HepG2 (cell line): ENCODE measurements at regions of chr10 and their contacts with region 1.

Region 1: DNA sequence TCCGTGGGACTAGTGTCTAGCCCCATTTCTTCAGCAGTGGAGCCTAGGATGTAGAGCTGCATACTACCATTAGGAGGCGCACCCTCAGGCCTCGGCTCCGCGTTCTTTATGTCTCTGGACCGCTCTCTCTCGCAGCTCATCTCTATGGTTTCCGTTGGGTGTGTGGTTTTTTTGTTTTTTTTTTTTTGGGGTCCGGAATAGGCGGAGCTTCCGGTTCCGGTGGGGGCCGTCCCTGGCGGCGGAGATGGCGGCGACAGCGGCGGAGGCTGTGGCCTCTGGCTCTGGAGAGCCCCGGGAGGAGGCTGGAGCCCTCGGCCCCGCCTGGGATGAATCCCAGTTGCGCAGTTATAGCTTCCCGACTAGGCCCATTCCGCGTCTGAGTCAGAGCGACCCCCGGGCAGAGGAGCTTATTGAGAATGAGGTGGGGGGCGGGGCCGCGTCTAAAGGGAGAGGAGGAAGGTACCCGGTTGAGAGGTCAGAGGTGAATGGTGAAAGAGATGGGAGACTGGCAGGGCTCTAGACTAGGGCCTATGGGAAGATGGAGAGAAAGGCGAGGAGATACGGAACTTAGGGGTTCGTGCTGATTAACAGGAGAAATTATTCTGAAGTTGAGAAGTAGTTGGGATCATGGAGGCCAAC is at the start of gene HIF1AN:
- DNase-seq: peak; percentile 94
- ATAC-seq: peak; percentile 98
- H3K4me3 ChIP-seq: peak within 1 kb of the TSS; percentile 72 to 85 (median 83)
- H3K27ac ChIP-seq: no peak within 1 kb of the TSS
- H3K4me1 ChIP-seq: peaks cover 35% of the 10 kb centered on the region
- H3K27me3 ChIP-seq: no peaks in the 10 kb centered on the region; a peak in 1 of 5 replicates
- CTCF ChIP-seq: peak; percentile 94
- EP300 ChIP-seq: peak in 1 of 2 experiments; percentile 24; a peak in 1 of 4 replicates
- POLR2A ChIP-seq: peak; percentile 70 to 86
- RAD21 ChIP-seq: no peak
- total RNA-seq, gene HIF1AN: 10.7 and 14.9 TPM in 2 replicates

Region 2: GRCh38 chr10:100518761-100519241 is 17.0 kb before region 1 on chr10:
- CTCF ChIA-PET with region 1: no interaction called
- POLR2A ChIA-PET with region 1: interaction called, 13 read pairs
- in situ Hi-C with region 1: no loop called
- intact Hi-C with region 1: no loop called
- DNase-seq: peak; percentile 65
- ATAC-seq: peak; percentile 76
- H3K4me3 ChIP-seq: peak overlapping the region; percentile 41 to 78 (median 60); a peak in 5 of 6 replicates
- H3K27ac ChIP-seq: no peak overlapping the region
- H3K4me1 ChIP-seq: peaks cover 14% of the 10 kb centered on the region
- H3K27me3 ChIP-seq: no peaks in the 10 kb centered on the region
- CTCF ChIP-seq: peak; percentile 77
- EP300 ChIP-seq: no peak
- POLR2A ChIP-seq: no peak
- RAD21 ChIP-seq: no peak

Region 3: GRCh38 chr10:100551196-100551595 is 15.4 kb after region 1 on chr10:
- CTCF ChIA-PET with region 1: no interaction called
- POLR2A ChIA-PET with region 1: interaction called, 14 read pairs
- in situ Hi-C with region 1: no loop called
- intact Hi-C with region 1: no loop called
- DNase-seq: no peak
- ATAC-seq: no peak
- H3K4me3 ChIP-seq: no peak overlapping the region
- H3K27ac ChIP-seq: no peak overlapping the region
- H3K4me1 ChIP-seq: peaks cover 14% of the 10 kb centered on the region
- H3K27me3 ChIP-seq: no peaks in the 10 kb centered on the region
- CTCF ChIP-seq: no peak
- EP300 ChIP-seq: no peak
- POLR2A ChIP-seq: no peak
- RAD21 ChIP-seq: no peak

Region 4: DNA sequence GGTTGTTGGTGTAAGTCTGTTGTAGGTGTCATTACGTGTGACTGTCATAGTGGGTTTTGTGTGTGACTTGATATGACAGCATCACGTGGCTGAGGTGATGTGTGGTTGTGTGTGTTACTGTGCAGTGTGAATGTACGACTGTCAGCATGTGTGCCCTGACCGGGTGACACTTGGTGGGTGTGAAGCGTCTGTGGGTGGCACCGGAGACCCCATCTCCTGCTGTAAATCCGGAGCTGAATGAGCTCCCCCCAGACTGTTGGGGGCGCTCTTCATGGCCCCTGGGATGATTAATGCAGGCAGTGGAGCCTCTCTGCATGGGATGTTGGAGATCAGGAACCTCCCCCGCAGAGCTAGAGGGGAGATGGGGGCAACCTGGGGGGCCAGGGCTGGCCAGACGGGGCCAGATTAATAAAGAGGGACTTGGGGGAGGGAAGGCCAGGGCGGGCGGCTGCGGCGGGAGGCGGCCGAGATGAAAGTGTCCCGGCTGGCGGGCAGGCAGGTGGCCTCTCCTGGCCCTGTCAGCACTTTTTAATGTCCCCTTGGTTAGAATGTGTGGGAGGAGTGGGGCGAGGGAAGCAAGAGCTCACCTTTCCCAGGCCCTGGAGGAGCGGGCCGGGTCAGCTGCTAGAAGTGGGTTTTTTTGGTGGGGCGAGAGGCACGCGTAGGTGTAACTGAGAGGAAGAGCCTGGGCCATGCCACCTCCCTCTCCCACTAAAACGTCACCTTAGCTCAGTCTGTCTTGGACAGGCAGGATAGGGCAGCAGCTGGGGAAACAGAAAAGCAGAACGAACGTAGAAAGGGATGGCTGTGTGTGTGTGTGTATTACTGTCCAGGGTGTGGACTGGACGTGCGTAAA is 34.0 kb after region 1 on chr10:
- CTCF ChIA-PET with region 1: no interaction called
- POLR2A ChIA-PET with region 1: interaction called, 22 read pairs
- in situ Hi-C with region 1: no loop called
- intact Hi-C with region 1: no loop called
- DNase-seq: peak; percentile 43
- ATAC-seq: peak; percentile 74
- H3K4me3 ChIP-seq: peak overlapping the region; percentile 58 to 72 (median 69)
- H3K27ac ChIP-seq: no peak overlapping the region
- H3K4me1 ChIP-seq: peaks cover 27% of the 10 kb centered on the region
- H3K27me3 ChIP-seq: peaks cover 2 to 36% of the 10 kb centered on the region in 2 experiments; a peak in 4 of 5 replicates
- CTCF ChIP-seq: peak; percentile 70
- EP300 ChIP-seq: no peak
- POLR2A ChIP-seq: no peak
- RAD21 ChIP-seq: no peak